Activated T-helper 2 cell treated with anti-CD3 and anti-CD28 coated beads, Interferon-gamma antibody, Interleukin-2, Interleukin-4, amounts not matched to agents 10 μg/mL and 5 μg/mL and 100 μg/mL, durations not matched to agents 14 hours and 24 hours and 36 hours (primary cell): ENCODE measurements at regions of chr3 and their contacts with region 1.

Region 1: DNA sequence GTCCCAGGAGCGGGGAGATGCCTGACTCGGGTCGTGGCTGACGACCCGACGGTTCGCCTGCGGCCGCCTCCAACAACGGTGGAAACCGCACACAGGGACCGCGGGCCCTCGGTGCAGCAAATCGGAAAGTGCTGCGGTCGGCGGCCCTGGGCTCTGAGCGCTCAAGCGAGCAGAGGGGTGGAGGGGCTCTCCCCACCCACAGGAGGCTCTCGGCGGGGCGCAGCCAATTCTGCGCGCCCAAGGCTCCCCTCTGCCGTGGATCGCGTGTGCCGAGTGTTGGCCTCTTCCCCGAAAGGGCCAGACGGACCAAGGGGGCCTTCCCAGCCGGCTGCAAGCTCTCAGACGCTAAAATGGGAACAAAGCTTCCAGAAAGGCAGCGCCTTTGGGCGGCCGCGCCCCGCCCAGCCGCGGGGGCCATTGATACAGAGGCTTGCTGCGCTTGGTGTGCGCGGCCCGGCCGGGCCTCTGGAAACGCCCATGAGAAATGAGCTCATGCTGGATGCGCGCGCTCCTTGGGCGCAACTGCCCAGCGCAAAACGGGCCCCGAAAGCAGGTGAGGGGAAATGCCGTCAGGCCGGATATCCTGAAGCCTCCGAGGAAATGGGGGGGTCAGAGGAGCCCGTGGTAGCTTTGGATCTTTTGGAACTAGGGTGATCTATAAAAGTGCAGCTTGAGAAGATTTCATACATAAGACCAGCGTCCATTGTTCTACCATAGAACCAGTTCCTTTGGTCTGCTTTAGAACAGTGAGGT is 1.2 kb upstream of the GSK3B start:
- DNase-seq: peak; percentile 89
- H3K4me3 Mint-ChIP-seq: no peak overlapping the region
- H3K27ac Mint-ChIP-seq: no peak overlapping the region
- H3K4me1 Mint-ChIP-seq: peaks cover 19% of the 10 kb centered on the region
- H3K27me3 Mint-ChIP-seq: no peaks in the 10 kb centered on the region

Region 2: DNA sequence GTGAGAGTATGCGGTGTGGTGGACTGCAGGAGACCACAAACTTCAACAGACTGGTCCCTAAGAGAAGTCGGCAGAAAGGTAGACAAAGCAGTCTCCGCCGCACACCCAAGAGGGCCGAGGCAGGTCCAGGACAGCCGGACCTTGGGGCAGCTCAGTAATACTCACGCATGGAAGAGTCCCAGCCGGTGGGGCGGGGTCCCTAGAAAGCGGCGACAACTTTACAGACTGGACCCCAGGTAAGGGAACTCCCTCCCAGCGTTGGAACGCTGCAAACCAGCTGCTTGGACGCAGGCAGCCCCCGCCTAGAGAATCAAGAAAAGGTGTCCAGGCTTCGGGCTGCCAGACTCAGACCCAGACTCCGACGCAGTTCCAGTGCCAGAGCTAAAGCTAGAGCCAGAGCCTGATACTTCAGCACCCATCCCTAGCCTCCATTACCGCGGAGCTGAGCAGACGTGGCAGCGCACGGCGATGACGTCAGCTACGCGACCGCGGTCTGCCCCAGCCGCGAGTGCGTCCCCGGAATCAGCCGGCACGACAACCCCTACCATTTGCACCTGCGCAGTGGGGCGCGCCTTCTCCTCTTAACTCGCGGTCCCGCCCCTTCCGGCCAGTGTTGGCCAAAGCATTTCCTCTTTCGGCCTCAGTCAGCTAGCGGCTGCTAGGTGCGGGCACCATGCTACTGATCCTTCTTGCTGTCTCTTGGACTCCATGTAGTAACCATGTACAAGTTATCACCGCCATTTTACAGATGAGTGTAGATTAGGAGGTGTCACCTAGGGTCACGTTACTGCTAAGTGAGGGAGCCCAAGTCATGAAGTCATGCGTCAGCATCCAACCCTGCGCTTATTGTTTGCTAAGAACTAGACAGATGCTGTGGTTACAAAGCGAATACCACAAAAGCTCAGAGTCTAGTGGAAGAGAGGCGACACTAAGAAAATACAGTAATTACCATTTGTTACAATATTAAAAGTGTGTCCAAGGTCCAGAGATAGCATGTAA is 631.9 kb before region 1 on chr3 and contains the start of gene TMEM39A:
- intact Hi-C with region 1: loop called (anchors 1 kb)
- DNase-seq: peak; percentile 98
- H3K4me3 Mint-ChIP-seq: peak within 1 kb of the TSS; percentile 95
- H3K27ac Mint-ChIP-seq: peak within 1 kb of the TSS; percentile 97
- H3K4me1 Mint-ChIP-seq: peaks cover 38% of the 10 kb centered on the region
- H3K27me3 Mint-ChIP-seq: no peaks in the 10 kb centered on the region
- total RNA-seq, gene TMEM39A: 50.4 and 58.4 TPM in 2 replicates

Region 3: DNA sequence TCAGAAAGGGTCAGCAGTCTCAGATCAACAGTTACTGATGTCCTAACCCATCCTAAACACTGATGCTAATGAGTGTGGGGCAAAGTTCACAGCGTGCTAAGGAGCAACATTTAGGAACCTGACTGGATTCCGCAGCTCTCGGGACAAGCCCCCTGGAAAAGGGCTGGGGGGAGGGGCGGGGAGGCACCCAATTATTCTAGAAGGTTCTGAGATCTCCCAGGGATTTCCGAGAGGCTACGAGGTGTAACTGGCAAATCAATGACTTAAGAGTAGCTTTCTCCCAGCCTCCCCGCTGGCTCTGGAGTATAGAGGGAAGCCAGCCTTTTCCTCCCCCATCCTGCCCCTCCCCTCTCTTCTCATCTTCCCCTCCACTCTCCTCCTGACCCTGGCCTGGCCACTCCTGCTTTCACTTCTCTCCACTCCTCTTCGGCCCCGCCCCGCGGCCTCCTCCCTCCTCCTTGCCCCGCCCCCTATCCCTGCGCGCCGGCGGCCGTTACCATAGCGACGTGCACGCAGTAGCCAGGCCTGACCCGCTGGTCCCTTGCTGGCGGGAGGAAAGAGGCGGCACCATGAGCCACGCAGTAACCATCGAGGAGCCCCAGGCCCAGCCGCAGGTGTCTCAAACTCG is 392.8 kb before region 1 on chr3 and contains the start of gene CFAP91:
- intact Hi-C with region 1: loop called (anchors 10 kb)
- DNase-seq: peak; percentile 74
- H3K4me3 Mint-ChIP-seq: peak within 1 kb of the TSS; percentile 71
- H3K27ac Mint-ChIP-seq: no peak within 1 kb of the TSS
- H3K4me1 Mint-ChIP-seq: peaks cover 29% of the 10 kb centered on the region
- H3K27me3 Mint-ChIP-seq: peaks cover 26% of the 10 kb centered on the region
- total RNA-seq, gene CFAP91: not detected in 2 replicates

Region 4: DNA sequence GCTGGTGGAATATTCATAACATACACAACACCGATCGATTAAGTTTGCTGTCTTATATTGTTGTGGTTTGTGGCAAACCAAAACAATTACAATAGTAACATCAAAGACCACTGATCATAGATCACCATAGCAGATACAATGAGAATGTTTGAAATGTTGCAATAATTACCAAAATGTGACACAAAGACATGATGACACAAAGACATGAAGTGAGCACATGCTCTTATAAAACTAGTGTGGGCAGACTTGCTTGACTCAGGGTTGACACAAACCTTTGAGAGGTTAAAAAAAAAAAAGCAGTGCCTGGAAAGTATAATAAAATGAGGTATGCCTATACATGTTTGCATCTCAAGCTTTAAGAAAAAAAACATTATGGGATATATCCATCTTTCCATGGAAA is 183.2 kb before region 1 on chr3:
- intact Hi-C with region 1: loop called (anchors 1 kb)
- DNase-seq: no peak
- H3K4me3 Mint-ChIP-seq: no peak overlapping the region
- H3K27ac Mint-ChIP-seq: peak overlapping the region; percentile 75
- H3K4me1 Mint-ChIP-seq: peaks cover 21% of the 10 kb centered on the region
- H3K27me3 Mint-ChIP-seq: peaks cover 2% of the 10 kb centered on the region

Region 5: DNA sequence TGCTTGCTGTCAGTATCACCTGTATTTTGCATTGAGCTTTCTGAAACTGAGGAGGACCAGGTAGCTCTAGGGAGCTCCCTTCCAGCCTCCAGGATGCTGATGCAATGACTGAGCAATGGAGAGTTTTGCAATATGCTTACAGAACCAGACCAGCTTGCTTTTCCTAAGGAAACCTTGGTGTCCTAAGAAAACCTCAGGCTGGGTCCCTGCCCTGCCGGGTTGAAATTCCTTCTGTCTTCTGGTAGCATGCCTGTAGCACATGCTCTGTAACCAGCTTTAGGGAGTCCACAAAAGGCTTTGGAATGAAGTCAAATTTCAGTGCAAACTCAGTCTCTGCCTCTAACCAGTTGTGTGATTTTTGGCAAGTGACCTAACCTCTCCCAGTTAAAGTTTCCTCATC is 64.6 kb after region 1 on chr3:
- intact Hi-C with region 1: no loop called
- DNase-seq: no peak
- H3K4me3 Mint-ChIP-seq: no peak overlapping the region
- H3K27ac Mint-ChIP-seq: no peak overlapping the region
- H3K4me1 Mint-ChIP-seq: no peaks in the 10 kb centered on the region
- H3K27me3 Mint-ChIP-seq: peaks cover 13% of the 10 kb centered on the region

Region 6: DNA sequence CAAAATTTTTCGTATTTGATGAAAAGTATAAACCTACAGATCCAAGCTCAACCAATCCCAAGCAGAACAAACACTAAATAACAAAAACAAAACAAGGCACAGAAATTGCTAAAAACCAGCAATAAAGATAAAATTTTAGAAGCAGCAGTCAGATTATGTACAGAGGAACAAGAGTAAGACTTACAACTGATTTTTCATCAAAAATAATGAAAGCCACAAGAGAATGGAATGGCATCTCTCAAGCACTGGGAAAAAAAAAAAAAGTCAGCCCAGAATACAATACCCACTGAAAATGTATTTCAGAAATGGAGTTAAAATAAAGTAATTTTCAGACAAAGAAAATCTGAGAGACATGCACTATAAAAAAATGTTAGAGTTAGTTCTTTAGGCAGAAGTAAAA is 162.6 kb after region 1 on chr3:
- intact Hi-C with region 1: no loop called
- DNase-seq: no peak
- H3K4me3 Mint-ChIP-seq: no peak overlapping the region
- H3K27ac Mint-ChIP-seq: no peak overlapping the region
- H3K4me1 Mint-ChIP-seq: no peaks in the 10 kb centered on the region
- H3K27me3 Mint-ChIP-seq: peaks cover 5% of the 10 kb centered on the region

Region 7: GRCh38 chr3:120348981-120349818 is 253.8 kb after region 1 on chr3 and contains the start of gene LRRC58:
- intact Hi-C with region 1: loop called (anchors 1 kb)
- DNase-seq: peak; percentile 85
- H3K4me3 Mint-ChIP-seq: peak within 1 kb of the TSS; percentile 83
- H3K27ac Mint-ChIP-seq: peak within 1 kb of the TSS; percentile 70
- H3K4me1 Mint-ChIP-seq: peaks cover 36% of the 10 kb centered on the region
- H3K27me3 Mint-ChIP-seq: peaks cover 26% of the 10 kb centered on the region
- total RNA-seq, gene LRRC58: 20.1 and 21.3 TPM in 2 replicates

Region 8: DNA sequence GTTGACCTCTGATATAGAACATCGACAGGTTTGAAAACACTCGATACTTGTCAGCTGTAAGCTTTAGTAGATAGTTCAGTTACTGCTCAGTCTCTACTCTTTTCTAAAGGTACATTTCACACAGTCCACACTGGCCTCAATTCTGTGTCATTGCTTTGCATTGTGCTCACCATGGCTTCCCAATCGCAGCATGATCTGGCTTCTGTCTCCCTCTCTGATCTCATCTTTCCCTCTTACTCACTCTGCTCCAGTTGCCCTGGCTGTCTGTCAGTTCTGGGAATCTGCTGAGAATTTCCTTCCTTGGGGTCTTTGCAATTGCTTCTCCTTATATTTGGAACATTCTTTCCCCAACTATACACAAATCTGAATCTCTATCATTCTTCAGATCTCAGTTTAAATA is 727.8 kb after region 1 on chr3:
- intact Hi-C with region 1: no loop called
- DNase-seq: no peak
- H3K4me3 Mint-ChIP-seq: no peak overlapping the region
- H3K27ac Mint-ChIP-seq: no peak overlapping the region
- H3K4me1 Mint-ChIP-seq: no peaks in the 10 kb centered on the region
- H3K27me3 Mint-ChIP-seq: peaks cover 4% of the 10 kb centered on the region